ENCODE measurements at regions of chrX and their contacts with region 1.

Region 1: DNA sequence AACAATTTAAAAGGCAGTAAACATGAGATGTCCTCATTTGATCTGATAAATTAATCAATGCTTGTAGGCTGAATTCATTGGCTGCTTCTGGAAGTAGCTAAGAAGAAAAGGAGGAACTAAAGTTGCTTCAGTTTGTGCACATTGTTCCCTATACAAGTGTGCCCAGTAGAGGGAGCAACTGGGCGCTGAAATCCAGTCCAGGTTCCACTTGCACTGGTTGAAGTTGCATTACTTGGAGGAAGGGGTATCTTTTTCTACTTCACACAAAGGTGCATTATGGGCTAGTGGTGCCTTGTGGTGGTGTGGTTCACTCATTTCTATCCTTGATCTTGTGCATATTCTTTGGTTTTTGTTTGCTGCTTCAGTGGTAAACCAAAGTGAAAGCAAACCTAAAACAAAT is 67.9 kb upstream of the SOX3 start:
- DNase-seq: peak; percentile 41
- H3K4me3 ChIP-seq: no peak overlapping the region
- H3K27ac ChIP-seq: no peak overlapping the region
- H3K4me1 ChIP-seq: no peaks in the 10 kb centered on the region
- H3K27me3 ChIP-seq: no peaks in the 10 kb centered on the region
- CTCF ChIP-seq: peak; percentile 81

Region 2: DNA sequence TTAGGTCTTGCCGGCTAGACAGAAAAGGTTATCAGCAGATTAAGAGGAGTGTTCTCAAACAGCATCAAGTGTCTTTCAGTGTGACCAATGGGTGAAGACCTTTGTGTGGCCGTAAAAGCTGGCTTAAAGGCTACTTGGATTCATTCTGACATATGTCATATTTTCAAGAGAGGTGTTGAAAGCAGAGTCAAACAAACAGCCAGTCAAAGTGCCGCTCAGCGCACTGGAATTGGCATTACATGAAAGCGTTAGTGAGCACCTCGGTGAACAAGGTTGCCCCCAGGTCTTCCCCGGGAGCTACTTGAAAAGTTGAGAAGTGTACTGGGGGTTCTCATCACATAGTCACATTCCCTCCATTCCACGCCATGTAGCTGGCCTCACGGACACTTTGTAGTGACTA is 216.8 kb before region 1 on chrX:
- CTCF ChIA-PET with region 1: no interaction called
- POLR2A ChIA-PET with region 1: no interaction called
- intact Hi-C with region 1: no loop called
- DNase-seq: no peak
- H3K4me3 ChIP-seq: no peak overlapping the region
- H3K27ac ChIP-seq: no peak overlapping the region
- H3K4me1 ChIP-seq: no peaks in the 10 kb centered on the region
- H3K27me3 ChIP-seq: peaks cover 3% of the 10 kb centered on the region
- CTCF ChIP-seq: no peak

Region 3: GRCh38 chrX:140456602-140457001 is 116.1 kb before region 1 on chrX:
- CTCF ChIA-PET with region 1: no interaction called
- POLR2A ChIA-PET with region 1: no interaction called
- intact Hi-C with region 1: no loop called
- DNase-seq: no peak
- H3K4me3 ChIP-seq: no peak overlapping the region
- H3K27ac ChIP-seq: no peak overlapping the region
- H3K4me1 ChIP-seq: no peaks in the 10 kb centered on the region
- H3K27me3 ChIP-seq: no peaks in the 10 kb centered on the region
- CTCF ChIP-seq: no peak

Region 4: GRCh38 chrX:140664939-140665338 is 92.2 kb after region 1 on chrX:
- CTCF ChIA-PET with region 1: no interaction called
- POLR2A ChIA-PET with region 1: no interaction called
- intact Hi-C with region 1: loop called (anchors 5 kb)
- DNase-seq: peak; percentile 37
- H3K4me3 ChIP-seq: no peak overlapping the region
- H3K27ac ChIP-seq: no peak overlapping the region
- H3K4me1 ChIP-seq: no peaks in the 10 kb centered on the region
- H3K27me3 ChIP-seq: no peaks in the 10 kb centered on the region
- CTCF ChIP-seq: peak; percentile 48

Region 5: GRCh38 chrX:140733769-140734342 is 161.1 kb after region 1 on chrX:
- CTCF ChIA-PET with region 1: no interaction called
- POLR2A ChIA-PET with region 1: no interaction called
- intact Hi-C with region 1: loop called (anchors 5 kb)
- DNase-seq: peak; percentile 63
- H3K4me3 ChIP-seq: no peak overlapping the region
- H3K27ac ChIP-seq: no peak overlapping the region
- H3K4me1 ChIP-seq: no peaks in the 10 kb centered on the region
- H3K27me3 ChIP-seq: no peaks in the 10 kb centered on the region
- CTCF ChIP-seq: peak; percentile 76